PC-9 (cell line): ENCODE measurements at regions of chr17 and their contacts with region 1.

Region 1: GRCh38 chr17:32783602-32784001 is 93.3 kb downstream of the MYO1D start:
- DNase-seq: peak in 1 of 2 experiments; percentile 54
- H3K4me3 ChIP-seq: no peak overlapping the region
- H3K27ac ChIP-seq: no peak overlapping the region
- H3K4me1 ChIP-seq: no peaks in the 10 kb centered on the region
- H3K27me3 ChIP-seq: no peaks in the 10 kb centered on the region
- CTCF ChIP-seq: peak; percentile 85

Region 2: DNA sequence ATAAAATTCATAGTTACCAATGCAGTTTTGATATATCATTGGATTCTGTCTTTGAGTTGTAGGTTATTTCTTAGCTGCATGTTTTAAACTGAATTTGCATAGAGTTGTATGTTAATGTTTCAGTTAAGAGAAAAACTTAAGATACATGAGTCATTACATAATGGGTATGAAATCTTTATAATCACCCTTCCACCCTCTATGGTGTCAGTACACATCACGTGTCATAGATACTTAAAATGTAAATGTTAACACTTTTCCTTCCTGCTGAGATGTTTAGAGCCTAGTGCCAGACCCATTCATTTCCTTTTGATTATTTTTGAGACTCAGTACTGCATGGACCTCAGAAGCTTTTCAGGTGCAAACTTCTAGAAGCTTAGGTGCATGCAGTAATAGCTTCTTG is 413.2 kb before region 1 on chr17:
- CTCF ChIA-PET with region 1: no interaction called
- POLR2A ChIA-PET with region 1: interaction called, 11 read pairs
- intact Hi-C with region 1: no loop called
- DNase-seq: no peak
- H3K4me3 ChIP-seq: no peak overlapping the region
- H3K27ac ChIP-seq: no peak overlapping the region
- H3K4me1 ChIP-seq: no peaks in the 10 kb centered on the region
- H3K27me3 ChIP-seq: no peaks in the 10 kb centered on the region
- CTCF ChIP-seq: no peak

Region 3: GRCh38 chr17:32742681-32743538 is 40.7 kb before region 1 on chr17:
- CTCF ChIA-PET with region 1: no interaction called
- POLR2A ChIA-PET with region 1: no interaction called
- intact Hi-C with region 1: no loop called
- DNase-seq: no peak
- H3K4me3 ChIP-seq: no peak overlapping the region
- H3K27ac ChIP-seq: no peak overlapping the region
- H3K4me1 ChIP-seq: no peaks in the 10 kb centered on the region
- H3K27me3 ChIP-seq: no peaks in the 10 kb centered on the region
- CTCF ChIP-seq: no peak

Region 4: DNA sequence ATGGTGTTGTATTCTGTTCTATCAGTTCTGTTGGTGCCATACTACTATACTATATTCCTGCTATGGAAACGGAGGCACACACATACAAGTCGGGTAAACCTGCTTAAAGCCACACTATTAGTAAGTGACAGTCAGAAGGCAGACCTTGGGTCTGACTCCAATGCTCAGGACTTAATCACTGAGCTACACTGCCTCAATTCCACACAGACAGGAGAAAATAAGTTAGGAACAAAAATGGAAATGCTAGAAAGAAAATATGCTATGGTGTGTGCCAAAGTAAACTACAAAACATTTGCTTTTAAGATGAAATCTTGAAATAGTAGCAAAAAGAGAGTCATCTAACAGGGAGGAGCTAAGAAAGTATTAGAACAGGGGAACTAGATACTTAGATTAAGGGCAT is 45.2 kb after region 1 on chr17:
- CTCF ChIA-PET with region 1: no interaction called
- POLR2A ChIA-PET with region 1: no interaction called
- intact Hi-C with region 1: no loop called
- DNase-seq: no peak
- H3K4me3 ChIP-seq: no peak overlapping the region
- H3K27ac ChIP-seq: no peak overlapping the region
- H3K4me1 ChIP-seq: no peaks in the 10 kb centered on the region
- H3K27me3 ChIP-seq: no peaks in the 10 kb centered on the region
- CTCF ChIP-seq: no peak

Region 5: DNA sequence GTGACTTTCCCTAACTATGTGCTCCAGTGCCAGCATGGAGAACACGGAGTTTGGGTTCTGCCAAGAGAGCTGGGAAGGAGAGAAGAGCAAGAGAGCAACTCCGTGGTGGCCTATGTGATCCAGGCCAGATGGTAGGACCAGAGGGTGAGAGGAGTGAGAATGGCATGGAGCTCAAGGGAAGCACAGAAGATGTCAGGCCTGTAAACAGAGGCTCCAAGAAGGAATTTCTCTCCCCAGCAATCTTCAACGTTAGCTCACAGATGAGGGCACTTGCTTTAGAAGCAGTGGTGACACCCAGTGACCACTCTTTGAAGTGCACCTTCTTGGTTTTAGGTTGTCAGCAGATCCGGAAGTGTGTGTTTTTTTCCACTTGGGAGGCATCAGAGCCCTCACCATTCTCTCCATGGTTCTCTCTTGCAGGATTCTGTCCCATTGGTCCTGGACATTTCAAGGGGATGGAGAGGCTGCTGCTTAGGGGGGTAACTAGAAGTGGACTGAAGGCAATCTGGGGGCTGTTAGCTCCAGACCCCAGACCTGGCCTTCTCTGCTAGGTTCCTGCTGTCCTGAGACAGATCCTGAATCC is 126.3 kb after region 1 on chr17:
- CTCF ChIA-PET with region 1: interaction called, 4 read pairs
- POLR2A ChIA-PET with region 1: interaction called, 4 read pairs
- intact Hi-C with region 1: loop called (anchors 1 kb)
- DNase-seq: peak; percentile 43 to 58
- H3K4me3 ChIP-seq: no peak overlapping the region
- H3K27ac ChIP-seq: no peak overlapping the region
- H3K4me1 ChIP-seq: no peaks in the 10 kb centered on the region
- H3K27me3 ChIP-seq: peaks cover 25% of the 10 kb centered on the region; the same call in 1 of the 2 replicates
- CTCF ChIP-seq: peak; percentile 77

Region 6: GRCh38 chr17:32997753-32998632 is 214.4 kb after region 1 on chr17:
- CTCF ChIA-PET with region 1: interaction called, 4 read pairs
- POLR2A ChIA-PET with region 1: no interaction called
- intact Hi-C with region 1: loop called (anchors 5 kb)
- DNase-seq: peak in 1 of 2 experiments; percentile 61
- H3K4me3 ChIP-seq: no peak overlapping the region
- H3K27ac ChIP-seq: no peak overlapping the region
- H3K4me1 ChIP-seq: no peaks in the 10 kb centered on the region
- H3K27me3 ChIP-seq: peaks cover 48% of the 10 kb centered on the region
- CTCF ChIP-seq: peak; percentile 88

Region 7: DNA sequence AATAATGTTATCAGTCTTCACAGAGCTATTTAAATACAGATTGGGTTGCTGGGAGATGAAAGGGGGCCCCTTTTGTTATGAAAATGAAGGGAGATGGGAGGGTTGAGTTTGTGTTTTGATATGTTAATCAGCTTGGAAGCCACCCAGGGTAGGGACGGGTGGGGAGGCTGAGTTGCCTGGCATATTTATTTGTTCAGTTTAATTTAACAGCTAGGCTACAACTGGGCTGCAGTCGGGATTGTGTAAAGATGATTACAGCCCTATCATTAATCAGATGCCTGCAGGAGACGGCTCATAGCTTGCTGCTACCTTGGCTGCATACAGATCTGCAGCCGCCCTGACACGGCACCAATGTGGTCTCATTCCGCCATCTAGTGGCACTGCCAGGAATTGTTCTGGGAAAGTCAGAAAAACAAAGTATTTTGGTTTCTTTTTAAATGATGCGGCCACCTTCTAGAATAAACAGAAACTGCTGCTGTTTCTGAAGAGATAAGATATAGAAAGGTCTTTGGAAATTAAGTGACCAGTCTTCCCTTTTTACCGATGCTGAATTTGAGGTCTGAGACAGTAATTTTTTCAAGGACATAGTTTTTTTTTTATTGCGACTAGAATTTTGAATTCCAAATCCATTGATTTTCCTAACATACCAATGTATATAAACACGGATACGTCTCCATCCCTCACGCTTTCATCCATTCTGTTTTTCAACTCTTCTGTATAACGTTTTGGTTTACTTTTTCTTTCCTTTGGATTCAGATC is 967.5 kb after region 1 on chr17:
- CTCF ChIA-PET with region 1: no interaction called
- POLR2A ChIA-PET with region 1: no interaction called
- intact Hi-C with region 1: loop called (anchors 5 kb)
- DNase-seq: peak in 1 of 2 experiments; percentile 56
- H3K4me3 ChIP-seq: no peak overlapping the region
- H3K27ac ChIP-seq: no peak overlapping the region
- H3K4me1 ChIP-seq: no peaks in the 10 kb centered on the region
- H3K27me3 ChIP-seq: peaks cover 19% of the 10 kb centered on the region; the same call in 1 of the 2 replicates
- CTCF ChIP-seq: peak; percentile 85